Activated CD4-positive, alpha-beta T cell treated with anti-CD3 and anti-CD28 coated beads, Interleukin-2, amount 10 ng/mL, durations not matched to agents 7 days and 5 days (primary cell): ENCODE measurements at regions of chr17 and their contacts with region 1.

Region 1: GRCh38 chr17:7627250-7628121 is at the start of gene SAT2:
- DNase-seq: peak; percentile 87
- H3K4me3 Mint-ChIP-seq: peak within 1 kb of the TSS; percentile 91
- H3K27ac Mint-ChIP-seq: peak within 1 kb of the TSS; percentile 85
- H3K4me1 Mint-ChIP-seq: peaks cover 16% of the 10 kb centered on the region
- H3K27me3 Mint-ChIP-seq: no peaks in the 10 kb centered on the region
- total RNA-seq, gene SAT2: 18.5 to 23.6 TPM

Region 2: DNA sequence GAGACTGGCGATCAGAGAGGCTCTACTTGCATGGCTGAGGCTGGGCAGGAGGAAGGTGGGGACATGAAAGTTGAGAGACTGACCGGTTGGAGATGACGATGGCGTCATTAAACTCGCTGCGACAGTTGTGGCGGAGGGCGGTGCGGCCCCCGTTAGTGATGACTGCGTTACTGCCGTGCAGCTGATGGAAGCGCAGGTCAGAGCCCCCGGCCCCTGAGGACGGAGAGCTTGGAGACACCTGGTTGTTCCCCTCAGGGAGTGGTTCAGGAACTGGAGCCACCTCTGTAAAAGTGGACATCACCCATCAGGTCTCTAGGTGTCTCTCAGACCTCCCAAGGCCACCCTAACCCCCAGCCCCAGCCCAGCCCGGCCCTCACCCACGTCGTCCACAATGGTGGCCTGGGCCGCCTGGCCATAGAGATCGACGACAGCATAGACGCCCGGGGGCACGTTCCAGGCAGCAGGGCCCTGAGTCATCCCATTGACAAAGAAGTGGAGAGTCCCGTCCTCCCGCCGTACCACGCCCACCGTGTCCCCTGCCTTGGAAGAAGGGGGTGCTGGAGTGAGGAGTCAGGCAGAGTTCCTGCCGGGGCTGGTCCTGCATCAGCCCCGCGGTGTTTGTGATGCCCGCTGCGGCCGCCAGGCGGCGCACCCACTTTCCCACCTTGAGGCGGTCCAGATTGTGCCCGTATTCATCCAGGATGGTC is 303.6 kb before region 1 on chr17:
- CTCF ChIA-PET with region 1: no interaction called
- POLR2A ChIA-PET with region 1: no interaction called
- DNase-seq: peak; percentile 71
- H3K4me3 Mint-ChIP-seq: no peak overlapping the region
- H3K27ac Mint-ChIP-seq: no peak overlapping the region
- H3K4me1 Mint-ChIP-seq: peaks cover 30% of the 10 kb centered on the region
- H3K27me3 Mint-ChIP-seq: no peaks in the 10 kb centered on the region

Region 3: GRCh38 chr17:7466639-7467341 is 160.7 kb before region 1 on chr17:
- CTCF ChIA-PET with region 1: no interaction called
- POLR2A ChIA-PET with region 1: no interaction called
- DNase-seq: no peak
- H3K4me3 Mint-ChIP-seq: no peak overlapping the region
- H3K27ac Mint-ChIP-seq: peak overlapping the region; percentile 54
- H3K4me1 Mint-ChIP-seq: peaks cover 21% of the 10 kb centered on the region
- H3K27me3 Mint-ChIP-seq: no peaks in the 10 kb centered on the region

Region 4: GRCh38 chr17:7484067-7484918 is 143.2 kb before region 1 on chr17 and contains the start of gene POLR2A:
- CTCF ChIA-PET with region 1: no interaction called
- POLR2A ChIA-PET with region 1: no interaction called
- DNase-seq: peak; percentile 96
- H3K4me3 Mint-ChIP-seq: peak within 1 kb of the TSS; percentile 94
- H3K27ac Mint-ChIP-seq: peak within 1 kb of the TSS; percentile 99
- H3K4me1 Mint-ChIP-seq: peaks cover 70% of the 10 kb centered on the region
- H3K27me3 Mint-ChIP-seq: no peaks in the 10 kb centered on the region
- total RNA-seq, gene POLR2A: 175 to 201 TPM

Region 5: GRCh38 chr17:7614422-7615264 is 12.8 kb before region 1 on chr17 and contains the start of gene FXR2:
- CTCF ChIA-PET with region 1: interaction called, 12 read pairs
- POLR2A ChIA-PET with region 1: no interaction called
- DNase-seq: peak; percentile 100
- H3K4me3 Mint-ChIP-seq: peak within 1 kb of the TSS; percentile 83
- H3K27ac Mint-ChIP-seq: peak within 1 kb of the TSS; percentile 96
- H3K4me1 Mint-ChIP-seq: peaks cover 32% of the 10 kb centered on the region
- H3K27me3 Mint-ChIP-seq: no peaks in the 10 kb centered on the region
- total RNA-seq, gene FXR2: 27.5 to 28.8 TPM

Region 6: GRCh38 chr17:7650509-7651096 is 23.1 kb after region 1 on chr17 and contains the start of gene ATP1B2:
- CTCF ChIA-PET with region 1: interaction called, 10 read pairs
- POLR2A ChIA-PET with region 1: no interaction called
- DNase-seq: peak; percentile 76
- H3K4me3 Mint-ChIP-seq: peak within 1 kb of the TSS; percentile 70
- H3K27ac Mint-ChIP-seq: peak within 1 kb of the TSS; percentile 41
- H3K4me1 Mint-ChIP-seq: peaks cover 17% of the 10 kb centered on the region
- H3K27me3 Mint-ChIP-seq: peaks cover 47% of the 10 kb centered on the region
- total RNA-seq, gene ATP1B2: 0.08 TPM in 1 of 2 experiments, not detected in the other